Posterior cingulate gyrus (tissue), 11 donors: ENCODE measurements at regions of chr1 and their contacts with region 1.

Region 1: GRCh38 chr1:182129398-182129797 is 67.9 kb upstream of the ZNF648 start:
- DNase-seq: peak in 7 of 10 donors; percentile 21 to 84 (median 59)

Region 2: DNA sequence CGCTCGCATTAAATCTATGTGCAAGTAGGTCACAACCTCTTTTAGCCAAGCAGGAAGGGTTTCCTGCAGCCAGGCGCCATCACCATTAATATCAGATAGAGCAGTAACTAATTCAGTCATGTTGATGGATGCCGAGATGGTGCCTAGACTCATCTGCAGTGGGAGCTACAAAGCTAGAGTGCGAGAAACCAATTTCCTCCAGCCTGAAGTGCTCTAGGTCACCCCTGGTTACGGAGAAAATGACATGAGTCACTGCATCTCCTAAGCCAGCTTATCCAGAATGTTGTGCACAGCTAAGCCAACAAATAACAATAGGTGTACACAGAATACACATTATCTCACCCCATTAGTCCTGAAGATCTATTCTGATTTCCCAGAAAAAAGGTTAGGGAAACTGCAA is 1534.7 kb before region 1 on chr1:
- intact Hi-C with region 1: no loop called
- DNase-seq: no peak

Region 3: GRCh38 chr1:181308098-181308497 is 821.3 kb before region 1 on chr1:
- intact Hi-C with region 1: no loop called
- DNase-seq: no peak

Region 4: DNA sequence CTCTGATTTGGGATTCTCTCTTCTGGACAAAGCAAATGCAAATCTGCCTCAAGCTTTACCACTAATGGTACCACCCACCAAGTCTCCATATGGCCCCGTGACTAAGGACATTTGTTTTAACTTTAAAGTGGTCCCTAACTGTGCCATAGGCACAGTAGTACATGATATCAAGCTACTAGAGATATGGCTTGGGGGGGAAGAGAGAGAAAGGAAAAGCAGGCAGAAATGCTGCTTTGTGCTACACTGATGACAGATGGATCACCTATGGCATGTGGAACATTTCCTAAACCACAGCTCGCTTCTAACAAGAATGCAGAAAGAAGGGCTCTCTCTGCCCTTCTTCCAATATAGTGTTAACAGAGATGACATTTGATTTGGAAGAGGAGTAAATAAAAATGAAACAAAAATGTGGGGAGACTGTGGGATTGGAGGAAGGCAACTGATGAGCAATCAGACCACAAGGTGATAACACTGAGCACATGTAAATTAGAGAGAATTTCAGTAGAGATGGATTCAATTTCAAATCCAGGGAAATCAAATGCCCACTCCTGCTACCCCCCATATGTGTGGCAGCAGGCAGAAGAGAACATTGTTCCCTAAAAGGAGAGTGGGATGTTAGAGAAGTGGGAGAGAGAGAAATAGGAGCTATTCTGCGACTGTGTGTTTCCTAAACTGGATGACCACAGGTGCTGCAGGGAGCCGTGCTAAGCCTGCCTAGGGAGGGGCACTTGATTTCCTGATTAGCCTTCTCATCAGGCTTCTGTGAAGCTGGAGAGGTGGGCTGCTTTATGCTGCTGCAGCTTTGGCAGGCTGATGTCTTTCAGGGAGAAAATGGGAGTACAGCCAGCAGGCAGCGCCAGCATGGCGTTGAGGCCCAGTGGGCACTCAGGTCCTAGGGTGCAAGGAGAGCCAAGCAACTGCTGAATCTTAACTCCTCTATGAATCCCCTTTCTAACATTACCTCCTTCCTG is 143.2 kb before region 1 on chr1:
- intact Hi-C with region 1: no loop called
- DNase-seq: peak in 5 of 10 donors; percentile 10 to 84 (median 25)

Region 5: DNA sequence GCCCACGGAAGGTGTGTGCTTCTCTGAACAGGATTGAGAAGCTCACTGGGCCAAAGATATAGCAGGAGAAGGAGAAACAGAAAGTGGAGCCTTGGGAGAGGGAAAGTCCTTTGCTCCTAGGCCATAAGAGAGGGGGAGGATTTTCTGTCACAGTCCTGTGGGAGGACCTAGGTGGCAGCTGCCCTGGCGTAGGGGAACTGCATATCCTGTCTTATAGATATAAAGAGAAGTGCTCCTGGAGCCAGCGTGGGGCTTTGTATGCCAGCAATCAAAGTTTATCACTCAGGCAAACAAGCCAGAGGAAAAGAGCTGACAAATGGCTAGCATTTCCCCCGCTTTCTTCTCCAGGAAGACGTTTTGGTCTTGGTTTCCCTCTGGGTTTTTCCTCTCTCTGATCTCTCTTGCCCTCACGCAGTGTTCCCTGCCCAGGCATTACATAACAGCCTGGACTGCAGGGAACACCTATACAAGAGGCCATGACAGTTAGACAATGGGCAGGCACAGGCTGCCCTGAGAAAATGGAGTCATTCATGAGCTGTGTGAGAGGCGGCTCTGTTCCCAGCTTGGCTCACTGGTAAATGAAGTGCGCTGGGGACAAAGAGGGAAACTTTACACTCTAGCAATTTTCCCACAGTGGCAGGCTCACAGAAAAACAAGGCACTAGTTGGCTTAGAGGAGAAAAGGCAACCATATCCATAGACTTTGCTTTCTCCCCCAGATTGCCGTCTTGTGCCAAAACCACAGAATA is 15.3 kb before region 1 on chr1:
- intact Hi-C with region 1: loop called (anchors 1 kb)
- DNase-seq: peak; percentile 68 to 96 (median 79)

Region 6: DNA sequence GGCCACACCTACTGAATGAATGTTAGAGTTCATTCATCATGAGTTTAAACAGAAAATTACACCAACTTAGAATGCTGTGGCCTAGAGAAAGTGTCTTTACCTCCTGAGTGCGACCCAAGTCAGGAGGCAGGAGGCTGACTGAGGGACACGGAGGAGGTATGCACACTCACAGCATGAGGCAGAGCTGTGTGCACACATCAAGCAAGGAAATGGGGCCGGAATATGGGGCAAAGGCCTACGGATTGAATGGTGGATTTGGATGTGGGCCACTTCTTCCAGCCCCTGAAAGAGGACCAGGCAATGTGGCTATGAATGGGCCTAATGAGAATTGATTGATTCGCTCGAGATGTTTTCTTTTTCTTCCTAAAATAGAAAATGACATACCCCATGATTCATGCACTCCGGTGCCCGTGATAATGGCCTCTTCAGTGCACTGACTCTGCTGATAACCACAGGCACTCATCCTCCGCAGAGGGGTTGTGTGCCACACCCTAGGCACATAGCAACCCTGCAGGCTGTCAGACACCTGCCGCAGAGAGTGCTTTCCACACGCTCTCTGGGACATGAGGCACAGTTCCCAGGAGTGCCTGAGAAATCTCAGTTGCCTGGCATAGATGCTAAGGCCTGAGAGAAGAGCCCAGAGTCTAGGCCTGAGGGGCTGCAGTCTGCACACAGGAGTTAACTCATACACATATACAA is 106.7 kb after region 1 on chr1:
- intact Hi-C with region 1: no loop called
- DNase-seq: peak in 5 of 10 donors; percentile 8 to 43 (median 19)